Caco-2 (cell line): ENCODE measurements at regions of chr15 and their contacts with region 1.

Region 1: DNA sequence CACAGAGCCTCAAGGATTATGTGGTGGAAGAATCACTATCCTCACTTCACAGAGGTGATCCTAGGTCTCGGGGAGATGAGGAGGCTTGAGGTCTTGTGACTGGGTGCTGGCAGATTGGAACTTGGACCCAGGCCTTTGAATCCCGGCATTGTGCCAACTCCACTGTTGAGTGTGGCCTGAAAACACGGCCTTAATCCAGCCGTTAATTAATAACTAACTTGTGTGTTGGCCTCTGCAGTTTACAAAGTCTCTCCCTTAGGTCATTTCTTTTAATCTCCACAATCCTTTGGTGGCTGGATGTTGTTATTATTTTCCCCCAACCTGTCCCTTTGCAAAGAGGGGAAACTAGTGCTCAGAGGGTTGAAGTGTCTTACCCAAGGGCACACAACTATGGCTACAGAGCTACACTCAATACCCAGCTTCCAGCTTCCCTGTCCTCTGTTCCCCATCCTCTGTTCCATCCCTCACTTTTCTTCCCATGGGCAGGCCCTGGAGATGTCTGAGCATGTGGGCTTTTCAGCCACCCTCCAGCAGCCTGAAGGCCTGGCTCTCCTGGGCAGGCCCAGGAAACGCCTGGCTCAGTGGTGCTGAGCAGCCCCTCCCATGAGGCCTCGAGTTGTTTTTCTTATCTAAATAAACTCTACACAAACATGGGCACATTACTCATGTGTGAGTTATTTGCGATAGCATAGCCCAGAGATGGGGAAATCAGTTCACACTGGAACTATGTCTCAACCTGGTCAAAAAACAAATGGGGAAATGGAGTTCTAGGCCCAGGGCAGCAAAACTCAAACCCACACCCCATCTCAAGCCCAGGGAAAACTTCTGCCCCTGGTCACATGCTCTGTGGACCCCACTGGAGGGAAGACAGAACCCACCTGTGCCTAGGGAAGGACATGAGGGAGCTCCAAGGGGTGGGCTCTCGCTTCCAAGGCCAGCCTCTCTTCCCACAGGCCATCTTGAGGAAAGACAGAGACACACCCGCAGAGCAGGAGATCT is 16.8 kb upstream of the SMAD3 start:
- DNase-seq: peak; percentile 86 to 91
- H3K4me3 ChIP-seq: no peak overlapping the region
- H3K4me3 Mint-ChIP-seq: peak overlapping the region; percentile 44
- H3K27ac Mint-ChIP-seq: peak overlapping the region; percentile 92
- H3K4me1 ChIP-seq: peaks cover 59% of the 10 kb centered on the region
- H3K4me1 Mint-ChIP-seq: peaks cover 54% of the 10 kb centered on the region
- H3K27me3 ChIP-seq: no peaks in the 10 kb centered on the region
- H3K27me3 Mint-ChIP-seq: no peaks in the 10 kb centered on the region
- CTCF ChIP-seq: no peak

Region 2: GRCh38 chr15:67024314-67024997 is 24.1 kb before region 1 on chr15:
- CTCF ChIA-PET with region 1: no interaction called
- POLR2A ChIA-PET with region 1: interaction called, 3 read pairs
- intact Hi-C with region 1: loop called (anchors 1 kb)
- DNase-seq: peak; percentile 66
- H3K4me3 ChIP-seq: no peak overlapping the region
- H3K4me3 Mint-ChIP-seq: no peak overlapping the region
- H3K27ac Mint-ChIP-seq: peak overlapping the region; percentile 10
- H3K4me1 ChIP-seq: peaks cover 12% of the 10 kb centered on the region
- H3K4me1 Mint-ChIP-seq: peaks cover 18% of the 10 kb centered on the region
- H3K27me3 ChIP-seq: no peaks in the 10 kb centered on the region
- H3K27me3 Mint-ChIP-seq: no peaks in the 10 kb centered on the region
- CTCF ChIP-seq: no peak

Region 3: DNA sequence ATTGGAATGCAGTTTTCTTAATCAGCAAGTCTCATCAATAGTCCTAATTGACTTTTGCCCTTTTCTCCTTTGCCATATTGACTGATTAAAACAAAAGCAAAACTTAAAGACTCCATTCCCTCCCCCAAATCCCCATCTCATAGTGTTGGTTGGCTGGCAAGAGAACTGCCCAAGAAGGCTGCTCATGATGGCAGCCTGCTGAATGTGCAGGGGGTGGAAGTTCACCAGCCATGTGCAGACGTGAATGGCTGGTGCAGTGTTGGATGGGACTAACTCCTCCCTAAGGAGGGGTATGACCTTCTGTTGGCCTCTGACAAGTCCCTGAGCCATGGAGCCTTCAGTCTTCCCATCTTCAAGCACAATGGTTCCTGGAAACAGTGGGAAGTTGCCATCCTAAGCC is 23.9 kb after region 1 on chr15:
- CTCF ChIA-PET with region 1: no interaction called
- POLR2A ChIA-PET with region 1: no interaction called
- intact Hi-C with region 1: no loop called
- DNase-seq: no peak
- H3K4me3 ChIP-seq: no peak overlapping the region
- H3K4me3 Mint-ChIP-seq: no peak overlapping the region
- H3K27ac Mint-ChIP-seq: peak overlapping the region; percentile 29
- H3K4me1 ChIP-seq: peaks cover 35% of the 10 kb centered on the region
- H3K4me1 Mint-ChIP-seq: peaks cover 31% of the 10 kb centered on the region
- H3K27me3 ChIP-seq: no peaks in the 10 kb centered on the region
- H3K27me3 Mint-ChIP-seq: no peaks in the 10 kb centered on the region
- CTCF ChIP-seq: no peak

Region 4: DNA sequence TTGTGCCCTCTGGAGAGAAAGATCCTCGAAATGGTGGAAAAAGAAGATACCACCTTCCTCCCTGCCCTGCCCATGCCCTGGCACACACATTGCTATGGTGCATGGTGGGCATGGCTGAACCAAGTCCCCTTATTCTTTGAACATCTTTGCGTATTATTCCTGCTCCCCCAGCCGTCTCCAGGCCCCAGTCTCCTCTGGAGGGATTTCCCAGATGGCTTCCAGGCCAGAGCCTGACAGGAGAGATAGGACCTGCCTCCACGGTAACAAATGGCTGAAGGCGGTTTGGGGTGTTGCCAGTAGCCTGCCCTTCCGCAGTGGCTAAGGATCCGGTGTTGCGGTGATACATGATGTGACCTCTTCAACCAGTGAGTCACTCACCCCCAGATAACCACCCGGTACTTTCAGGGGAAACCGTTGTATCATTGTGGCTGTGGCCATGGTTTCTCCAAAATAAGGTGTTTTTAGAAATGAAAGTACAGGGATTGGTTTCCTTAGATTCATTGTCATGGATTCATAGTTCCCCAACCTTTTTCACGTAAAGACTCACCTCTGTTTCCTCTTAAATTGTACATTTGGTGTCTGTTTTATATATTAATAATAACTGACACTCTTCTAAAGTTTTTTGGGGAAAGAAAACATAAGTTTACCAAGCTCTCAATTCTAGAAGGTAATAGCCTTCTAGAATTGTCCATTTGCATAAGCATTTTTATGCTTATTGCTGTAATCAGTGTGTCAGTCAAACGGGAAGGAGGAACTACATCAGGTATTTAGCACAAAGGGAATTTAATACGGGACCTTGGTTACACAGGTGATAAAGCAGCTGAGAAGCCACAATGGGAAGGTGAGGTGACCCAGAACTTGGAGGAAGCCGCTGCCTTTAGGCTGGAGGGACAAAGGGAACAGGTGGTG is 42.7 kb after region 1 on chr15:
- CTCF ChIA-PET with region 1: no interaction called
- POLR2A ChIA-PET with region 1: no interaction called
- intact Hi-C with region 1: no loop called
- DNase-seq: no peak
- H3K4me3 ChIP-seq: no peak overlapping the region
- H3K4me3 Mint-ChIP-seq: no peak overlapping the region
- H3K27ac Mint-ChIP-seq: no peak overlapping the region
- H3K4me1 ChIP-seq: peaks cover 20% of the 10 kb centered on the region
- H3K4me1 Mint-ChIP-seq: peaks cover 33% of the 10 kb centered on the region
- H3K27me3 ChIP-seq: no peaks in the 10 kb centered on the region
- H3K27me3 Mint-ChIP-seq: no peaks in the 10 kb centered on the region
- CTCF ChIP-seq: no peak

Region 5: GRCh38 chr15:67135497-67135893 is 86.9 kb after region 1 on chr15:
- CTCF ChIA-PET with region 1: no interaction called
- POLR2A ChIA-PET with region 1: no interaction called
- intact Hi-C with region 1: loop called (anchors 1 kb)
- DNase-seq: peak; percentile 71 to 73
- H3K4me3 ChIP-seq: no peak overlapping the region
- H3K4me3 Mint-ChIP-seq: peak overlapping the region; percentile 49
- H3K27ac Mint-ChIP-seq: peak overlapping the region; percentile 91
- H3K4me1 ChIP-seq: peaks cover 84% of the 10 kb centered on the region
- H3K4me1 Mint-ChIP-seq: peaks cover 78% of the 10 kb centered on the region
- H3K27me3 ChIP-seq: no peaks in the 10 kb centered on the region
- H3K27me3 Mint-ChIP-seq: no peaks in the 10 kb centered on the region
- CTCF ChIP-seq: peak in 1 of 2 experiments; percentile 50

Region 6: GRCh38 chr15:67175643-67176071 is 127.1 kb after region 1 on chr15:
- CTCF ChIA-PET with region 1: no interaction called
- POLR2A ChIA-PET with region 1: no interaction called
- intact Hi-C with region 1: loop called (anchors 5 kb)
- DNase-seq: no peak
- H3K4me3 ChIP-seq: no peak overlapping the region
- H3K4me3 Mint-ChIP-seq: no peak overlapping the region
- H3K27ac Mint-ChIP-seq: peak overlapping the region; percentile 26
- H3K4me1 ChIP-seq: peaks cover 53% of the 10 kb centered on the region
- H3K4me1 Mint-ChIP-seq: peaks cover 51% of the 10 kb centered on the region
- H3K27me3 ChIP-seq: no peaks in the 10 kb centered on the region
- H3K27me3 Mint-ChIP-seq: no peaks in the 10 kb centered on the region
- CTCF ChIP-seq: no peak